ENCODE measurements at regions of chr6 and their contacts with region 1.

Region 1: GRCh38 chr6:129500958-129501918 is 208.7 kb downstream of the ARHGAP18 start:
- DNase-seq: peak; percentile 33 to 67
- H3K4me3 ChIP-seq: no peak overlapping the region
- H3K27ac ChIP-seq: peak overlapping the region in 1 of 5 donors; percentile 46
- H3K4me1 ChIP-seq: peaks cover 0 to 46% (median 11%) of the 10 kb centered on the region in 4 donors
- H3K27me3 ChIP-seq: no peaks in the 10 kb centered on the region
- CTCF ChIP-seq: no peak
- EP300 ChIP-seq: no peak
- POLR2A ChIP-seq: no peak

Region 2: DNA sequence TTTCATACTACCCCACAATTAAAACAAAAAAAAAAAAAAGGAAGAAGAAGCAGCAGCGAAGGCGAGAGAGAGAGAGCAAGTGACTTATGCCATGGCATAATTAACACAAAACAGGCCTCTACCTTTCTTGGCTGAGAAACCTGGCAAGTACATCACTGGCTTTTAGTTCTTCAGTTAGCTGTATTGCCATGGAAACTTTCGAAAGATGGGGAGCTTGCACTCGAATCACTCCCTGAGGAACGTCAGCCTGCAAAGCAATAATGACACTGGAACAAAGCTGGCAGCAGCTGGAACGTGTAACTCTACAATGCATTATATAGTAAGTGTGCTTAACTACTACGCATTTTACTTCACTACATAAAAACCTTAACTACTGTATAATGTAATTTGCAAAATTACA is 82.6 kb after region 1 on chr6:
- intact Hi-C with region 1: loop called (anchors 10 kb)
- DNase-seq: peak in 1 of 2 donors; percentile 70
- H3K4me3 ChIP-seq: no peak overlapping the region
- H3K27ac ChIP-seq: no peak overlapping the region
- H3K4me1 ChIP-seq: peaks cover 0 to 5% (median 0%) of the 10 kb centered on the region in 4 donors
- H3K27me3 ChIP-seq: no peaks in the 10 kb centered on the region
- CTCF ChIP-seq: no peak
- EP300 ChIP-seq: no peak
- POLR2A ChIP-seq: no peak

Measured in stomach (tissue), 19 donors.